H1 (cell line): ENCODE measurements at regions of chr14 and their contacts with region 1.

Region 1: GRCh38 chr14:100108042-100108825 is 43.0 kb downstream of the EVL start:
- DNase-seq: peak; percentile 72 to 98
- H3K4me3 ChIP-seq: no peak overlapping the region
- H3K27ac ChIP-seq: no peak overlapping the region
- H3K4me1 ChIP-seq: no peaks in the 10 kb centered on the region
- H3K27me3 ChIP-seq: no peaks in the 10 kb centered on the region
- CTCF ChIP-seq: peak; percentile 87 to 98 (median 95)
- EP300 ChIP-seq: no peak
- POLR2A ChIP-seq: no peak
- RAD21 ChIP-seq: peak; percentile 80 to 85

Region 2: DNA sequence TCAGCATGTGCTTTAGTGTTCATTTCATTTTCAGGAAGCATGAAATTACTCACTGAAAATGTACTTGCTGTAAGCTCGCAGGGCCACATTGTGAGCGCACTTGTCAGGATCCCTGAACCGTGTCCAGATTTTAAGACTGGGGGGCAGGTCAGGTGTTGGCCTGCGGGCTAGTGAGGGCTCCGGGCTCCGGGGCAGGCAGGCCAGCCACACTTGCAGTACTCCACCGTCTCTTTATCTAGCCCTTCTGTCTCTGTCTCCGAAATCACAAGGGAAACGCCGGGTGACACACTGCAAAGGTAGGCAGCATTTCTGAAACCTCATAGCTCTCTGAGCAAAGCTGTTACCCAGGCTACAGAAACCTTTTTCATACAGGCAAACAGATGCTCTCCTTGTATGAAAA is 216.3 kb before region 1 on chr14:
- CTCF ChIA-PET with region 1: no interaction called
- POLR2A ChIA-PET with region 1: no interaction called
- DNase-seq: no peak
- H3K4me3 ChIP-seq: no peak overlapping the region
- H3K27ac ChIP-seq: no peak overlapping the region
- H3K4me1 ChIP-seq: peaks cover 7 to 31% (median 17%) of the 10 kb centered on the region in 4 experiments
- H3K27me3 ChIP-seq: no peaks in the 10 kb centered on the region; a peak in 1 of 7 replicates
- CTCF ChIP-seq: no peak
- EP300 ChIP-seq: no peak
- POLR2A ChIP-seq: no peak
- RAD21 ChIP-seq: no peak

Region 3: GRCh38 chr14:99982537-99983250 is 125.5 kb before region 1 on chr14:
- CTCF ChIA-PET with region 1: interaction called, 39 read pairs
- POLR2A ChIA-PET with region 1: interaction called, 5 read pairs
- DNase-seq: peak in 1 of 2 experiments; percentile 46
- H3K4me3 ChIP-seq: no peak overlapping the region
- H3K27ac ChIP-seq: no peak overlapping the region
- H3K4me1 ChIP-seq: no peaks in the 10 kb centered on the region
- H3K27me3 ChIP-seq: no peaks in the 10 kb centered on the region
- CTCF ChIP-seq: peak; percentile 50 to 89 (median 86)
- EP300 ChIP-seq: no peak
- POLR2A ChIP-seq: no peak
- RAD21 ChIP-seq: peak; percentile 88 to 90

Region 4: DNA sequence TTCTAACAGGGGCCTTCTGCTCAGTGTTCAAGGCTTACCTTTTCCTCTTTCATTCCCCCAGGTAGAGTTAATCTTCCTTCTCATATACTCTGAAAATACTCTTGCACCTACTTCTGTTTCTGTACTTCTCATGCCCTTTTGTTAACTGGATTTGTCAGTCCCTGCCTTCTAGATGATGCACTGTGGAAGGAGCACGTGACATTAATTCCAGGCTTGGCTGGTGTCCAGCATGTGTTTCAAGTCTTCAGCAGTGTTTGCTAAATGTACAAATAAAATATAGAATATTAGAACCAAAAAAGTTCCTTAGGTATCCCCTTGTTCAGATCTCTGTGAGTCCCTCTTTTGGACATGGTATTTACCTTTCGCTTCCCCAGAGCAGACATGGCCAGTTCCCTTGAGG is 70.9 kb before region 1 on chr14:
- CTCF ChIA-PET with region 1: interaction called, 22 read pairs
- POLR2A ChIA-PET with region 1: no interaction called
- DNase-seq: no peak
- H3K4me3 ChIP-seq: no peak overlapping the region
- H3K27ac ChIP-seq: no peak overlapping the region
- H3K4me1 ChIP-seq: no peaks in the 10 kb centered on the region; a peak in 1 of 7 replicates
- H3K27me3 ChIP-seq: no peaks in the 10 kb centered on the region
- CTCF ChIP-seq: no peak
- EP300 ChIP-seq: no peak
- POLR2A ChIP-seq: no peak
- RAD21 ChIP-seq: no peak

Region 5: GRCh38 chr14:100078991-100079725 is 29.1 kb before region 1 on chr14:
- CTCF ChIA-PET with region 1: interaction called, 240 read pairs
- POLR2A ChIA-PET with region 1: no interaction called
- DNase-seq: peak; percentile 17 to 71
- H3K4me3 ChIP-seq: no peak overlapping the region
- H3K27ac ChIP-seq: no peak overlapping the region
- H3K4me1 ChIP-seq: peaks cover 3 to 18% (median 4%) of the 10 kb centered on the region in 4 experiments; a peak in 6 of 7 replicates
- H3K27me3 ChIP-seq: no peaks in the 10 kb centered on the region; a peak in 1 of 7 replicates
- CTCF ChIP-seq: peak; percentile 13 to 45 (median 25)
- EP300 ChIP-seq: no peak
- POLR2A ChIP-seq: no peak
- RAD21 ChIP-seq: peak; percentile 27 to 55; a peak in 3 of 4 replicates

Region 6: DNA sequence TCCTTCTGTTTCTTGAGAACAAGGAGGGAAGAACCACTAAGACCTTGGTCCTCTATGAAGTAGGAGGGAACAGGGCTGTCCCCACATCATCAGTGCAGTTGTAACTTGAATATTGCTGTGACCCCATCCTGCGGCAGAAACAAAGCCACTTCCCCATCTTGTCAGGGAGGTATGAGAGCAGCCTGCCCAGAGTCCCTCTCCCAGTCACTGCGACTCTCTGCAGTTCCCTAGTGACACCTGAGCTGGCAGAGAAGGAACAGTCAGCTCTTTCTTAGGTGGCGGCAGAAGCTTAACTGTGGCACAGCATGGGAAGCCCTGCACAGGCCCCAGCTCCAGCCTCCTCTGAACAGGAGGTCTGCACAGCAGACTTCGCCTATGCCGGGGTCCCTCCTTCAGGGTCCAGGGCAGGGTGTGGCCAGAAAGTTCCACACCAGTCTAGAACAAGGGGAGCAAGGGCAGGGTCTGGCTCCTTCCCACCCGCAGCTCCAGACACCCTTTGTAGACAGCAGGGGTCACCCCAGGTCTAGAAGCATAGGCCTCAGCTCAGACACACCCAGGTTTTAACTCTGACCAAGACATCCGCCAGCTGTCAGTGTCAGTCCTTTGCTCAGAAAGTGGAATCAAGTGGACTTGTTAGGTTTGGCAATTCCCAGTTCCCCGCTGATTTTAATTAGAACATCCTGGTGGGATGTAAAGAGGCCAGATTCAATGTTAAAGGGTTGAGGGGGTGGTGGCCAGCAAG is 14.4 kb after region 1 on chr14:
- CTCF ChIA-PET with region 1: interaction called, 104 read pairs
- POLR2A ChIA-PET with region 1: no interaction called
- DNase-seq: no peak
- H3K4me3 ChIP-seq: no peak overlapping the region
- H3K27ac ChIP-seq: no peak overlapping the region
- H3K4me1 ChIP-seq: no peaks in the 10 kb centered on the region
- H3K27me3 ChIP-seq: no peaks in the 10 kb centered on the region
- CTCF ChIP-seq: no peak
- EP300 ChIP-seq: no peak
- POLR2A ChIP-seq: no peak
- RAD21 ChIP-seq: peak in 1 of 2 experiments; percentile 23; a peak in 1 of 4 replicates

Region 7: DNA sequence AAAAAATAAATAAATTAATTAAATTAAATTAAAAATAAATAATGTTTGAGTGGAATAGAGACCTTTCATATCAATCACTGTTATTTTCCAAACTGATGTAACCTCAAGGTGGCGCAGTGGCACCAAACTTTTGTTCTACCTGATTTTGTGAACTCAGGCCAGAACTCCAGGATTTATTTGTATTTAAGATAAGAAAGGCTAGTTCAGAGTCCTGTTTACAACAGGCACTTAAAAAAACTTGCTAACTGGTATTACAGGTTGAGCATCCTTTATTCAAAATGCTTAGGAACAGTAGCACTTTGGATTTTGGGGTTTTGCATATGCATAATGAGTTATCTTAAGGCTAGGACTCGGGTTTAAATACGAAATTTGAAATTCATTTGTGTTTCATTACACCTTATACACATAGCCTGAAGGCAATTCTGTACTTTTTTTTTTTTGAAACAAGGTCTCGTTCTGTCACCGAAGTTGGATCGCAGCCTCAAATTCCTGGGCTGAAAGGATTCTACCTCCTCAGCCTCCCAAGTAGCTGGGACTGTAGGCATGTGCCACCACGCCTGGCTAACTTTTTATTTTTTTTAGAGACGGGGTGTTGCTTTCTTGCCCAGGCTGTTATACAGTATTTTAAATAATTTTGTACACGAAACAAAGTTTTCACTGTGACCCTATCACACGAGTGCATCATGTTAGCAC is 163.2 kb after region 1 on chr14:
- CTCF ChIA-PET with region 1: no interaction called
- POLR2A ChIA-PET with region 1: no interaction called
- DNase-seq: no peak
- H3K4me3 ChIP-seq: no peak overlapping the region
- H3K27ac ChIP-seq: no peak overlapping the region
- H3K4me1 ChIP-seq: peaks cover 0 to 15% (median 4%) of the 10 kb centered on the region in 4 experiments; a peak in 6 of 7 replicates
- H3K27me3 ChIP-seq: no peaks in the 10 kb centered on the region
- CTCF ChIP-seq: peak in 2 of 3 experiments; percentile 17 to 45; a peak in 2 of 4 replicates
- EP300 ChIP-seq: no peak
- POLR2A ChIP-seq: no peak
- RAD21 ChIP-seq: peak; percentile 24 to 39; a peak in 2 of 4 replicates